Activated naive CD4-positive, alpha-beta T cell treated with anti-CD3 and anti-CD28 coated beads for 36 hours (primary cell): ENCODE measurements at regions of chr10 and their contacts with region 1.

Region 1: GRCh38 chr10:11017570-11018431 is at the start of gene CELF2:
- DNase-seq: peak; percentile 64
- H3K4me3 Mint-ChIP-seq: peak within 1 kb of the TSS; percentile 70
- H3K27ac Mint-ChIP-seq: no peak within 1 kb of the TSS
- H3K4me1 Mint-ChIP-seq: peaks cover 9% of the 10 kb centered on the region
- H3K27me3 Mint-ChIP-seq: peaks cover 69% of the 10 kb centered on the region
- total RNA-seq, gene CELF2: 68.2 to 72.2 TPM

Region 2: DNA sequence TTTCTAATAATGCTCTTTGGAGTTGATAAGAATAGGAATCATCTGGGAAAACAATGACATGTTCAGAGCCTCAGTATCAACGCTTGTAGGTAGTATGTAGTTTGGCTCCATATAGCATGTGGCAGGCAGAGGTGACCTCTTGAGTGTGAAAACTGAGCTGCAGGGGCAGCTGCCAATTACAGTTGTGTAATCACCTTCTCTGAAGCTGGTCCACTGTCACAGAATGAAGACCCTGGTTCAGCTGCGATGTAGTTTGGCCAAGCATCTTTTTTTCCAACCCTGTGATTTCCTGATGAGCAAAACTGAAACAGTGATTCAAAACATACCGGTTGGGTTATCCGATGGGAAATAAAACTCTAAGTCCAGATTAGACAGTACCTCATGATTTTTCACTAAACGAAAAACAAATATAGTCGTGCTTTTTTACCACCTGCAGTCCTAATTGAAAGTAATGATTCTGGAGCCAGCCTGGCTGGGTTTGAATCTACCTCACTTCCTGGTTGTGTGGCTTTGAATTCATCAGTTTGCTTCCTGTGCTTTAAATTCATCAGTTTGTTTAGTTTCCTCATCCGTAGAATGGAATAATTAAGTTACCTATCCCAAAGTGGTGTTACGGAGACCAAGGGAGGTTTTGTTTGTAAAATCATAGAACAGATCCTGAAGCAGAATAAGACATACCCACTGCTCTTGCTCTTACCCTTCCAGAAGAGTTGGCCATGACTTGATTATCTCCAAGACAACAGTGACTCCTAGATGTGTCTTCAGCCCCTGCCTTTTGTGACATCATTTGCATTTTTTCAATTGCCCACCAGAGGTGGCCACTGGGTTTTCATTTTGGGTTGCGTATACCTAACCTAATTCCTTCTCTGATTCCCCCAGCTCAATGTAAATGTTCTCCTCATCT is 87.2 kb after region 1 on chr10:
- CTCF ChIA-PET with region 1: no interaction called
- intact Hi-C with region 1: loop called (anchors 5 kb)
- DNase-seq: peak; percentile 21
- H3K4me3 Mint-ChIP-seq: no peak overlapping the region
- H3K27ac Mint-ChIP-seq: no peak overlapping the region
- H3K4me1 Mint-ChIP-seq: peaks cover 12% of the 10 kb centered on the region
- H3K27me3 Mint-ChIP-seq: no peaks in the 10 kb centered on the region